Naive thymus-derived CD8-positive, alpha-beta T cell (primary cell): ENCODE measurements at regions of chr7 and their contacts with region 1.

Region 1: DNA sequence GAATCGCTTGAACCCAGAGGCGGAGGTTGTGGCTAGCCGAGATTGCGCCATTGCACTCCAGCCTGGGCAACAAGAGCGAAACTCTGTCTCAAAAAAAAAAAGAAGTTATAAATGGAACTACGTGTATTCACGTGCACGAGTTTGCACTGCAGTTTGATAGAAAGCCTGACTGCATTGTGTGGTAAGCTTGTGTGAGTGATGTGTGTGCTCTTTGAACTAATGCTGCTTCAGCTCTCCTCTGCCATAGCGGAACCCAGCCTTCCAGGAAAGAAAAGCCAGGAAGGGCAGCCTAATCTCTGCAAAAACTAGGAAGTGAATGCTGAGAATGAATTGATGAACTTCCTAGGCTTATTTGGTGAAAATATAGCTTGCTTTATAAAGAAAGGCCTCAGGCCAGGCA is 15.6 kb upstream of the MKRN1 start:
- DNase-seq: no peak
- ATAC-seq: no peak
- H3K4me3 Mint-ChIP-seq: no peak overlapping the region
- H3K27ac Mint-ChIP-seq: no peak overlapping the region
- H3K4me1 Mint-ChIP-seq: peaks cover 0 to 3% (median 0%) of the 10 kb centered on the region in 4 donors
- H3K27me3 Mint-ChIP-seq: no peaks in the 10 kb centered on the region

Region 2: GRCh38 chr7:140479062-140479738 is 15.7 kb before region 1 on chr7 and contains the start of gene MKRN1:
- POLR2A ChIA-PET with region 1: interaction called, 43 read pairs
- DNase-seq: peak; percentile 87 to 95 (median 92)
- ATAC-seq: peak; percentile 85 to 86
- H3K4me3 Mint-ChIP-seq: peak within 1 kb of the TSS; percentile 94 to 100 (median 99)
- H3K27ac Mint-ChIP-seq: peak within 1 kb of the TSS; percentile 97 to 99 (median 99)
- H3K4me1 Mint-ChIP-seq: peaks cover 17 to 30% (median 28%) of the 10 kb centered on the region in 4 donors
- H3K27me3 Mint-ChIP-seq: no peaks in the 10 kb centered on the region
- polyA plus RNA-seq, gene MKRN1: 92.6 to 141 (median 109) TPM